B cell (primary cell): ENCODE measurements at regions of chr19 and their contacts with region 1.

Region 1: DNA sequence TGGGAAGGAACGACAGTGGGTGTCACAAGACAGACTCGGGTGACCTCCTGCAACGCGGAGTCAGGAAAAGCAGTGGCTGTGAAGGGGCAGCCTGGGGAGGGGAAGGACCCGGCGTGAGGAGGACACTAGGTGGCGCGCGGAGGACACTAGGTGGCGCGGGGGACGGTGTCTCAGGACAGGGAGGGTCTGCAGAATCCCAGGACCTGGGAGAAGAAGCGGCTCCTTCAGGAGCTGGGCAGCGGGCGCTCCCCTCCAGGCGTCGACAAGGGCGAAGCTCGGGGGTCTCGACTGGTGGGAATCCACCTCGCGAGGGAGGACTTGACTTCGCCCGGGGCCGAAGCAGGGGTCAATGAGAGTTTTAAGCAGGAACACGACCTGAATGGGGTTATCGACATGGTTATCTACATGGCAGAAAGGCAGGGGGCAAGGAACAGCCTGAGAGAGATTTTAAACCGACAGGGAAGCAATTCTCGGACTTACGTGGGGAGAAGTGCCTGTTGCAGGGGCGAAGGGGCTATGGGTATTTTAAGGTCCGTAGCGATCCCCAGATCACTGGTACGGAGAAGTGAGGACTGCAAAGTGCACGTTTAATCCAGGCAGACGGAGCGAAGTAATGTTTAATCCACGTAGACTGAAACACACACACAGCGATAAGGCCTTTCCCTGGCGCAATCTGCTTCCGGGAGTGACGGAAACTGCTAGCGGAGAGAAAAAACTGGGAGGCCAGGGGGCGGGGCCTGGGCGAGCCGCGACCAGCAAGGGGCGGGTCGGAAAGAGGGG is at the start of gene ZNF616:
- DNase-seq: peak; percentile 96
- ATAC-seq: peak; percentile 66
- H3K4me3 ChIP-seq: peak within 1 kb of the TSS; percentile 86 to 100 (median 97)
- H3K4me3 Mint-ChIP-seq: peak within 1 kb of the TSS; percentile 98
- H3K27ac ChIP-seq: peak within 1 kb of the TSS; percentile 66 to 84
- H3K27ac Mint-ChIP-seq: peak within 1 kb of the TSS; percentile 93
- H3K4me1 ChIP-seq: peaks cover 16 to 18% of the 10 kb centered on the region in 2 donors
- H3K4me1 Mint-ChIP-seq: peaks cover 27% of the 10 kb centered on the region
- H3K27me3 ChIP-seq: no peaks in the 10 kb centered on the region
- H3K27me3 Mint-ChIP-seq: no peaks in the 10 kb centered on the region
- CTCF ChIP-seq: peak; percentile 86
- total RNA-seq, gene ZNF616: 13.8 and 14.2 TPM in 2 replicates

Region 2: GRCh38 chr19:51916167-51916566 is 223.3 kb before region 1 on chr19:
- CTCF ChIA-PET with region 1: no interaction called
- POLR2A ChIA-PET with region 1: no interaction called
- intact Hi-C with region 1: no loop called
- DNase-seq: no peak
- ATAC-seq: no peak
- H3K4me3 ChIP-seq: no peak overlapping the region
- H3K4me3 Mint-ChIP-seq: no peak overlapping the region
- H3K27ac ChIP-seq: no peak overlapping the region
- H3K27ac Mint-ChIP-seq: no peak overlapping the region
- H3K4me1 ChIP-seq: no peaks in the 10 kb centered on the region
- H3K4me1 Mint-ChIP-seq: peaks cover 2% of the 10 kb centered on the region
- H3K27me3 ChIP-seq: no peaks in the 10 kb centered on the region
- H3K27me3 Mint-ChIP-seq: no peaks in the 10 kb centered on the region
- CTCF ChIP-seq: no peak

Region 3: GRCh38 chr19:51926784-51927742 is 212.4 kb before region 1 on chr19 and contains the start of gene ZNF613:
- CTCF ChIA-PET with region 1: no interaction called
- POLR2A ChIA-PET with region 1: no interaction called
- intact Hi-C with region 1: loop called (anchors 1 kb)
- DNase-seq: peak; percentile 94
- ATAC-seq: peak; percentile 92
- H3K4me3 ChIP-seq: peak within 1 kb of the TSS; percentile 78 to 93 (median 86)
- H3K4me3 Mint-ChIP-seq: peak within 1 kb of the TSS; percentile 90
- H3K27ac ChIP-seq: peak within 1 kb of the TSS; percentile 72 to 76
- H3K27ac Mint-ChIP-seq: peak within 1 kb of the TSS; percentile 84
- H3K4me1 ChIP-seq: peaks cover 10 to 14% of the 10 kb centered on the region in 2 donors
- H3K4me1 Mint-ChIP-seq: peaks cover 22% of the 10 kb centered on the region
- H3K27me3 ChIP-seq: no peaks in the 10 kb centered on the region
- H3K27me3 Mint-ChIP-seq: no peaks in the 10 kb centered on the region
- CTCF ChIP-seq: peak; percentile 26
- total RNA-seq, gene ZNF613: 7.0 and 11.2 TPM in 2 replicates

Region 4: GRCh38 chr19:52095172-52096014 is 44.0 kb before region 1 on chr19 and contains the start of gene ZNF841:
- CTCF ChIA-PET with region 1: no interaction called
- POLR2A ChIA-PET with region 1: no interaction called
- intact Hi-C with region 1: loop called (anchors 1 kb)
- DNase-seq: peak; percentile 88
- ATAC-seq: peak; percentile 99
- H3K4me3 ChIP-seq: peak within 1 kb of the TSS; percentile 89 to 100 (median 99)
- H3K4me3 Mint-ChIP-seq: peak within 1 kb of the TSS; percentile 93
- H3K27ac ChIP-seq: peak within 1 kb of the TSS; percentile 62 to 87
- H3K27ac Mint-ChIP-seq: peak within 1 kb of the TSS; percentile 85
- H3K4me1 ChIP-seq: peaks cover 14 to 20% of the 10 kb centered on the region in 2 donors
- H3K4me1 Mint-ChIP-seq: peaks cover 33% of the 10 kb centered on the region
- H3K27me3 ChIP-seq: no peaks in the 10 kb centered on the region
- H3K27me3 Mint-ChIP-seq: no peaks in the 10 kb centered on the region
- CTCF ChIP-seq: no peak
- total RNA-seq, gene ZNF841: 50.8 and 54.5 TPM in 2 replicates

Region 5: GRCh38 chr19:52171321-52172169 is 32.1 kb after region 1 on chr19 and contains the start of gene ZNF836:
- CTCF ChIA-PET with region 1: interaction called, 4 read pairs
- POLR2A ChIA-PET with region 1: interaction called, 5 read pairs
- intact Hi-C with region 1: loop called (anchors 1 kb)
- DNase-seq: peak; percentile 92
- ATAC-seq: peak; percentile 98
- H3K4me3 ChIP-seq: peak within 1 kb of the TSS; percentile 71 to 100 (median 82)
- H3K4me3 Mint-ChIP-seq: peak within 1 kb of the TSS; percentile 98
- H3K27ac ChIP-seq: peak within 1 kb of the TSS; percentile 66 to 90
- H3K27ac Mint-ChIP-seq: peak within 1 kb of the TSS; percentile 97
- H3K4me1 ChIP-seq: peaks cover 17 to 20% of the 10 kb centered on the region in 2 donors
- H3K4me1 Mint-ChIP-seq: peaks cover 35% of the 10 kb centered on the region
- H3K27me3 ChIP-seq: no peaks in the 10 kb centered on the region
- H3K27me3 Mint-ChIP-seq: no peaks in the 10 kb centered on the region
- CTCF ChIP-seq: no peak
- total RNA-seq, gene ZNF836: 42.0 and 46.4 TPM in 2 replicates

Region 6: DNA sequence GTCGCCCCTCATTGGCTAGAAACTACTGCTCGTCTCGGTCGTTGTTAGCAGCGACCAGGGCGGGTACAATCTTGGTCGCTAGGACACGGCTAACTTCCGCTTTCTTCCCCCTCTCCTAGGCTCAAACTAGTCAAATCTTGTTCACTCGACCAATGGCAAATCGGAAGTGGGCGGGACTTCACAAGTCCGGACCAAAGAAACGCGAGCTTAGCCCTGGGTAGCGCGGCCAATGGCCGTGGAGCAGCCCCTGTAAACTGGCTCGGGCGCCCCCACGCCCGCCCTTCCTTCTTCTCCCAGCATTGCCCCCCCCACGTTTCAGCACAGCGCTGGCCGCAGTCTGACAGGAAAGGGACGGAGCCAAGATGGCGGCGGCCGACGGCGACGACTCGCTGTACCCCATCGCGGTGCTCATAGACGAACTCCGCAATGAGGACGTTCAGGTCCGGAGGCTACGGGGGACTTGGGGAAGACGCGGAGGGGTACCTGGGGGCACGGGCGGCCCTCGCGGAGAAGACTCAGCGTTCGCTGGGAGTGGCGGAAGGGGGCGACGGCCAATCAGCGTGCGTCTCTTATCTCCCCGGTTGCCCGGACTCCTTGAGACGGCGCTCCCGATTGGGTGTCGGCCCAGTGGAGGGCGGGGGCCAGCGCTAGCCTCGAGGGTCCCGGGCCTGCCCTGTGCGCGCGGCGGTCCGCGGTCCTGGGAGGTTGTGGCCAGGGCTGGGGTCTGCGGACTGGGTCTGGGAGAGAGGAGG is 50.5 kb after region 1 on chr19 and contains the start of gene PPP2R1A:
- CTCF ChIA-PET with region 1: interaction called, 3 read pairs
- POLR2A ChIA-PET with region 1: interaction called, 5 read pairs
- intact Hi-C with region 1: loop called (anchors 1 kb)
- DNase-seq: peak; percentile 100
- ATAC-seq: peak; percentile 74
- H3K4me3 ChIP-seq: peak within 1 kb of the TSS; percentile 60 to 100 (median 85)
- H3K4me3 Mint-ChIP-seq: peak within 1 kb of the TSS; percentile 99
- H3K27ac ChIP-seq: peak within 1 kb of the TSS; percentile 89 to 99
- H3K27ac Mint-ChIP-seq: peak within 1 kb of the TSS; percentile 100
- H3K4me1 ChIP-seq: peaks cover 41 to 56% of the 10 kb centered on the region in 2 donors
- H3K4me1 Mint-ChIP-seq: peaks cover 45% of the 10 kb centered on the region
- H3K27me3 ChIP-seq: no peaks in the 10 kb centered on the region
- H3K27me3 Mint-ChIP-seq: no peaks in the 10 kb centered on the region
- CTCF ChIP-seq: no peak
- total RNA-seq, gene PPP2R1A: 202 and 227 TPM in 2 replicates

Region 7: GRCh38 chr19:52237771-52238400 is 98.4 kb after region 1 on chr19:
- CTCF ChIA-PET with region 1: interaction called, 82 read pairs
- POLR2A ChIA-PET with region 1: no interaction called
- intact Hi-C with region 1: no loop called
- DNase-seq: peak; percentile 74
- ATAC-seq: peak; percentile 77
- H3K4me3 ChIP-seq: no peak overlapping the region
- H3K4me3 Mint-ChIP-seq: no peak overlapping the region
- H3K27ac ChIP-seq: no peak overlapping the region
- H3K27ac Mint-ChIP-seq: no peak overlapping the region
- H3K4me1 ChIP-seq: no peaks in the 10 kb centered on the region
- H3K4me1 Mint-ChIP-seq: no peaks in the 10 kb centered on the region
- H3K27me3 ChIP-seq: no peaks in the 10 kb centered on the region
- H3K27me3 Mint-ChIP-seq: no peaks in the 10 kb centered on the region
- CTCF ChIP-seq: peak; percentile 93

Region 8: DNA sequence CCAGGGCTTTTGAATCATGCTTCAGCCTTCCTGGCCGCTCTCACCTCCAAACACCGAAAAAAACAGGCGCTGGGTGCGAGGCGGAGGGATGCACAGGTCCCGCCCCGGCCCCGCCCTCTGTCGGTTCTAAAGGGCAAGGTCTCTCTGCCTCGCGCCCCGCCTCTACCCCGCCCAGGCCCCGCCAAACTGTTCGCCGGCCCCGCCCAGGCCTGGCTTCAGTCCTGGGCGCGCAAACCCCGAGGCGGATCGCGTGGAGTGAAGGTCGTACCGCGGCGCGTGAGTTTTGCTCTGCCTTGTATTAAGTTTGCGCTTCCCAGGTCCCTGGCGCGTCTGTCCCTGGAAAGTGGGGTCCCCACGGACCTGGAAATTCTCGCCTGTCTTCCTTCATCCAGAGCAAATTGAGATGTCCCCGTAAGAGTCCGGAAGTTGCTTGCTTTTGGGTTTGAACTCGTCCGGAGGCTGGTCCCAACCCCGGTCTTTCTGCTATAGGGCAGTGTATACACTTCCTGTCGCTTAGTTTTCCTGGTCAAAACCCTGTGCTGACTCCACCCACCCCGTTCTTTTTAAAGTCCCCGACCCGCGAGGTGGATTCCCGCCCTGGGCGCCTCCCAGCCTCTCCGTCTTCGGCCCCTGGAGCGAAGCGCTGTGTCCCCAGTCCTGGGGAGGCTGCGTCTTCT is 396.5 kb after region 1 on chr19:
- CTCF ChIA-PET with region 1: no interaction called
- POLR2A ChIA-PET with region 1: no interaction called
- intact Hi-C with region 1: loop called (anchors 5 kb)
- DNase-seq: peak; percentile 90
- ATAC-seq: peak; percentile 99
- H3K4me3 ChIP-seq: peak overlapping the region; percentile 71 to 86 (median 76)
- H3K4me3 Mint-ChIP-seq: peak overlapping the region; percentile 95
- H3K27ac ChIP-seq: peak overlapping the region; percentile 45 to 77
- H3K27ac Mint-ChIP-seq: peak overlapping the region; percentile 90
- H3K4me1 ChIP-seq: peaks cover 2 to 18% of the 10 kb centered on the region in 2 donors
- H3K4me1 Mint-ChIP-seq: peaks cover 31% of the 10 kb centered on the region
- H3K27me3 ChIP-seq: no peaks in the 10 kb centered on the region
- H3K27me3 Mint-ChIP-seq: no peaks in the 10 kb centered on the region
- CTCF ChIP-seq: peak; percentile 29